ENCODE measurements at regions of chr18 and their contacts with region 1.

Region 1: DNA sequence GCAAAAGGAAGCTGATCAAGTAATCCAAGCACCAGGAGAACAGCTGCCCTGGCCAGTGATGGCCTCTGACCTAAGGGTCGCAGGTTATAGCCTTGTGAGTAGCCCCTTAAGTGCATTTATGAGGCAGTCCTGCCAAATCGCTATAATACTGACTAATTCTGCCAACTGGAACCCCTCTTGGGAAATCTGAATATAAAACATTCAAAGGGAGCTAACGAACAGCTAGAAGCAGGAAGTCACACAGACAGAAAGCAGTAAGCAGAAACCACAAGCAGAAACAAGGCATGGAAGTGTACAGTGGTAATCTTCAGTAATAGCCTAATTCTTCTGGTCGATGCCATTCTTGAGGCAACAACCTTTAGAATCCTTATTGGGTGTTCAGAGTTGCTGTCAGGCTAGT is 521.3 kb downstream of the METTL4 start:
- DNase-seq: no peak
- H3K4me3 ChIP-seq: no peak overlapping the region
- H3K27ac ChIP-seq: no peak overlapping the region
- H3K4me1 ChIP-seq: no peaks in the 10 kb centered on the region
- H3K27me3 ChIP-seq: no peaks in the 10 kb centered on the region
- CTCF ChIP-seq: no peak

Region 2: GRCh38 chr18:1446765-1447164 is 603.2 kb before region 1 on chr18:
- intact Hi-C with region 1: no loop called
- DNase-seq: no peak
- H3K4me3 ChIP-seq: no peak overlapping the region
- H3K27ac ChIP-seq: no peak overlapping the region
- H3K4me1 ChIP-seq: no peaks in the 10 kb centered on the region
- H3K27me3 ChIP-seq: no peaks in the 10 kb centered on the region
- CTCF ChIP-seq: no peak

Region 3: GRCh38 chr18:2009942-2010697 is 39.9 kb before region 1 on chr18:
- intact Hi-C with region 1: loop called (anchors 1 kb)
- DNase-seq: no peak
- H3K4me3 ChIP-seq: no peak overlapping the region
- H3K27ac ChIP-seq: no peak overlapping the region
- H3K4me1 ChIP-seq: no peaks in the 10 kb centered on the region
- H3K27me3 ChIP-seq: no peaks in the 10 kb centered on the region
- CTCF ChIP-seq: no peak

Measured in tibial artery (tissue), 4 donors.